ENCODE measurements at regions of chr11 and their contacts with region 1.

Region 1: GRCh38 chr11:73141848-73142286 is 251 bp downstream of the FCHSD2 start:
- H3K4me3 Mint-ChIP-seq: peak overlapping the region; percentile 100
- H3K27ac Mint-ChIP-seq: peak overlapping the region; percentile 89
- H3K4me1 Mint-ChIP-seq: peaks cover 45% of the 10 kb centered on the region
- H3K27me3 Mint-ChIP-seq: no peaks in the 10 kb centered on the region

Region 2: DNA sequence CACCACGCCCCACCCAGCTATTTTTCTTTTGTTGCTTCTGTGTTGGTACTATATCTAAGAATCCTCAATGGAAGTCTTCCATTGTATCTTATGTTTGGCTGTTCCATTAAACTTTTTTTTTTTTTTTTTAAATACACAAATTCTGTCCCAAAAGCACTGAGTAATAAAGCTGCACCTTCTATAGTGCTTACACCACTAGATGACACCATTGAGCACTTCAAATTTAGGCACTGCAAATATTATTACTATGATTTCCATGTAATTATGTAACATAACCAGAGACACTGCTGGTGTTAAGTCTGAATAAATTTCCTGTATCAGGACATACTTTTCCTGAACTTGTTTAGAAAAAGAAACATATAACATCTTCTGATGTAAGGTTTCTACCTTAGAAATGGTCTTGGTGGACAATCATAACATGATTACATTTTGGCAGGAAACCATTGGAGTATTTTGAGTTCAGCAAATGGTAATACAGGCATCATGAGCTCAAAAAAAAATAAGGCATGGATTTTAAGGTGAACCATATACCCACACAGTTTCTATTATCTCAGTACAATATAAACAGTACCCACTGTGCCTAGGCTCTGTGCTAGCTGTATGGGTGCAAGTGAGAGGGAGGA is 217.2 kb before region 1 on chr11:
- intact Hi-C with region 1: loop called (anchors 10 kb)
- H3K4me3 Mint-ChIP-seq: no peak overlapping the region
- H3K27ac Mint-ChIP-seq: no peak overlapping the region
- H3K4me1 Mint-ChIP-seq: peaks cover 26% of the 10 kb centered on the region
- H3K27me3 Mint-ChIP-seq: no peaks in the 10 kb centered on the region

Region 3: DNA sequence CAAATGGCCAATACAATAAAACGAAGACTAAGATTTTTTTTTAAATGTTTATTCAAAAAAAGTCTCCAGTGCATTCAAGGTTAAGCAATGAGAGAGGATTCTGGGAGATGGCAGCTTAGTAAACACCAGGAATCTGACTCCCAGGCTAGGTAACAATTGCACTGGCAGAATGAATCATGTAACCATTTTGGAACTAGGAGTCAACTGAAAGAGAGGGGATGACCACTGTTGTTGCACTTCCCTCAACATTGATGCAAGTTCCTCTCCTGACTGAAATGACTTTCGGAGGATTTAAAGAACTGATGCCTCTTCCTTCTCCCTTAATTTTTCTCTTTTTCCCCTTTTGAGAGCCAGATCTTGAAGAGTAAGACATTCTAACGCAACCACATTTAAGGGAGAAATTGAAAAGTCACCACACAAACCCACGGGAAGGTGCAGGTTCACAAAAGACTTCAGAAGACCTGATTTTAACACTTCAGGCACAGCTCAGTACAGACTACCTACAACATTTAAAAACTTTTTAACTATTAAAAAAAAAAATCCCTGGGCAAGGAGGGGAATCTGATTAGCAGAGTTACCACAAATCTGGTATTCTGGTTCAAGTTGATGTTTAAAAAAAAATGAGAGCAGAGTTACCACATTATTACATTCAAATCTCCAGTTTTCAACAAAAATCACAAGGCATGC is 56.5 kb before region 1 on chr11:
- intact Hi-C with region 1: loop called (anchors 10 kb)
- H3K4me3 Mint-ChIP-seq: peak overlapping the region; percentile 15
- H3K27ac Mint-ChIP-seq: peak overlapping the region; percentile 90
- H3K4me1 Mint-ChIP-seq: peaks cover 35% of the 10 kb centered on the region
- H3K27me3 Mint-ChIP-seq: no peaks in the 10 kb centered on the region

Region 4: GRCh38 chr11:73157053-73158010 is 15.5 kb after region 1 on chr11:
- intact Hi-C with region 1: loop called (anchors 2 kb)
- H3K4me3 Mint-ChIP-seq: peak overlapping the region; percentile 64
- H3K27ac Mint-ChIP-seq: peak overlapping the region; percentile 89
- H3K4me1 Mint-ChIP-seq: peaks cover 85% of the 10 kb centered on the region
- H3K27me3 Mint-ChIP-seq: no peaks in the 10 kb centered on the region

Region 5: DNA sequence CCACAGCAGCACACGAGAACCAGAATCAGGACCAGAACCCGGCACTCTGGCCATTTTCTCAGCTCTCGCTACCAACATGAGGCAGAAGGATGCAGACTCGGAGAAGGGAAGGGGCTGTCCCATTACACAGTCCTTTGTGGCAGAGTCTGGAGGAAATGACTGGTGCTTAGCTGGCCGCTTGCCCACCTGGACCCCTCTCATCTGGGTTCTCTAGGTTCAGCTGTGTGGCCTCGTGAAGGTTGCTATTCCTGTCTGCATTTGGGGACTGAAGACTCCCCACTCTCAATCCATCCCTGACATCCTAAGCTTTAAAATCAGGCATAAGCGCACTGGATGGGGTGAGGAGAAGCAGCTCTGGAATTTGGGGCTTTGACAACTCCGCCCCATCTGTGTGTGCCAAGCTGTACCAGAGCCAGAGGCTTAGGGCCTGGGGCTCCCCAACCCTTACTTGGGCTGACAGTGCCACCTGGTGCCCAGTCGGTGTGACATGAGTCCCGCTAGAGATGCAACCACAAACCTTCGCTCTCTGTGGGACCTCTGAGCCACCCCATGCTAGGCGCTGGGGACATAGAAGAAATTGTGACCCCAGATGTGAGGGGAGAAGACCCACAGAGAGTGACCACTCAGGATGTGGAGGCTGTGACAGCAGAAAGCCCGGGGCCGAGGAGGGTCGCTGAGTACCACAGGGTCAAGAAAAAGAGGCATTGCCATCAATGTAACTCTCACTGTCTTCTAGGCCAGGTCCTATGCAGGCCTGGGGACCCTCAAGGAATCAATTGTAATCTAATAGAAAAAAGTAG is 36.1 kb after region 1 on chr11:
- intact Hi-C with region 1: loop called (anchors 5 kb)
- H3K4me3 Mint-ChIP-seq: no peak overlapping the region
- H3K27ac Mint-ChIP-seq: peak overlapping the region; percentile 52
- H3K4me1 Mint-ChIP-seq: peaks cover 30% of the 10 kb centered on the region
- H3K27me3 Mint-ChIP-seq: peaks cover 3% of the 10 kb centered on the region

Measured in dendritic cell treated with granulocyte-macrophage colony-stimulating factor and Interleukin-4, amounts not matched to agents 40 ng/mL and 50 ng/mL, for 4 days (primary cell).